ENCODE measurements at regions of chr17 and their contacts with region 1.

Region 1: DNA sequence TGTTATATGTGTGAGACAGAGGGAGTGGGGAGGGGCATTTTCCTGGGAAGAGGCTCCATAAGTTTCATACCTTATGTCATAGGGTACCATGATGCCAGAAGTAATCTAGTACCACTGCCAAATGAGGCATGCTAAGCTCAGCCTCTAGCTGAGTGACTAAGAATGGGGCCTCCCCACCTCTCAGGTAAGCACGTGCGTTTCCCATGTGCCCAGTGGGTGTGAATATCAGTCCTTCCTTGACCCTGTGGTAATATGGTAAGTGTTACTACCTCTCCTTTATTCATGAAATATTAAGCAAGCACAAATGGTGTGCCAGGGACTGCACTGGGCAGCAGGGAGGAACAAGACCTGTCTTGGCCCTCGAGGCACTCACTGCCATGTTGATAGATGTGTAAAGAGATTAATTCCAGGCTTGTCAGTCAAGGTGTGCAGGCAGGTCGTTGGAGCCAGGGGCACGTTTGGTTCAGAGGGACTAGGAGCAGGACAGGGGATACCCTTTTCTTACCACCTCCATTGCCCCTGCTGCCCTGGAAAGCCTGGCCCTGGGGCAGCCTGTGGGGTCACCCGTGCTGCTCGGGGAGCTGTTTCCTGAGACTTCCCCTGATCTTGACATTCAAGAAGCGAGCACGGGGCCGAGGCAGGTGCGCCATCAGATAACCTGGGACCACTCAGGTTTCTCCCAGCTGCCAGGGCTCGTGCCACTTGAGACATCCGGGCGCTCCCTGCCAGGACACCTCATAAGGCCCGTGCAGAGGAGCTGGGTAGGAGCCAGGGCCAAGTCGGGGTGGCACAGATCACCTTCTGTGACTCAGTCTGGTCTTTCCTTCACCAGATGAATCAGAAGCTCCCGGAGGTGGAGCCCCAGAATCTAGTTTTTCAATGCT is 8.8 kb downstream of the RSAD1 start:
- DNase-seq: peak; percentile 58
- ATAC-seq: peak; percentile 91
- H3K4me3 Mint-ChIP-seq: no peak overlapping the region
- H3K27ac Mint-ChIP-seq: no peak overlapping the region
- H3K4me1 Mint-ChIP-seq: peaks cover 16% of the 10 kb centered on the region
- H3K27me3 Mint-ChIP-seq: no peaks in the 10 kb centered on the region

Region 2: DNA sequence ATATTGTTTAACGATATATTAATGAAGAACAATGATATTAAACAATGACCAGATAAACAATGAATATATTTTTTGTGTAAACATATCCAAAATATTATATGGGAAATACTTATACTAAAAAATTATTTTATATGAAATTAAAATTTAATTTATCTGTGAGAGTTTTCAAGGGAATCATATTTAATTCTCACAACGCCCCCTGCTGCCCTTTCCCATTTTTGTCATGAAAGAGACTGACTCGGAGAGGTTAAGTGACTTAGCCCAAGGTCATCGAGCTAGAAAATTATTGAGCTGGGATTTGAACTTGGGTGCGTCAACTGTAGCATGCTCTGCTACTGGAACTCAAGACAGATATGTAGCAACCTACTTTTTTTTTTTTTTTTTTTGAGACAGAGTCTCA is 13.6 kb after region 1 on chr17:
- CTCF ChIA-PET with region 1: interaction called, 12 read pairs
- POLR2A ChIA-PET with region 1: no interaction called
- intact Hi-C with region 1: loop called in 1 of 2 experiments (anchors 2 kb)
- DNase-seq: peak; percentile 61
- ATAC-seq: peak; percentile 34
- H3K4me3 Mint-ChIP-seq: no peak overlapping the region
- H3K27ac Mint-ChIP-seq: no peak overlapping the region
- H3K4me1 Mint-ChIP-seq: peaks cover 5% of the 10 kb centered on the region
- H3K27me3 Mint-ChIP-seq: peaks cover 2% of the 10 kb centered on the region

Region 3: GRCh38 chr17:50686494-50687199 is 199.2 kb after region 1 on chr17:
- CTCF ChIA-PET with region 1: no interaction called
- POLR2A ChIA-PET with region 1: no interaction called
- intact Hi-C with region 1: no loop called
- DNase-seq: no peak
- ATAC-seq: no peak
- H3K4me3 Mint-ChIP-seq: no peak overlapping the region
- H3K27ac Mint-ChIP-seq: no peak overlapping the region
- H3K4me1 Mint-ChIP-seq: no peaks in the 10 kb centered on the region
- H3K27me3 Mint-ChIP-seq: no peaks in the 10 kb centered on the region